ENCODE measurements at regions of chr6 and their contacts with region 1.

Region 1: GRCh38 chr6:95145457-95145856 is 431.9 kb upstream of the MANEA start:
- DNase-seq: no peak
- H3K4me3 ChIP-seq: no peak overlapping the region
- H3K27ac ChIP-seq: no peak overlapping the region
- H3K4me1 ChIP-seq: no peaks in the 10 kb centered on the region
- H3K27me3 ChIP-seq: no peaks in the 10 kb centered on the region
- CTCF ChIP-seq: no peak
- POLR2A ChIP-seq: no peak

Region 2: GRCh38 chr6:95230071-95230740 is 84.7 kb after region 1 on chr6:
- intact Hi-C with region 1: loop called (anchors 5 kb)
- DNase-seq: no peak
- H3K4me3 ChIP-seq: no peak overlapping the region
- H3K27ac ChIP-seq: no peak overlapping the region
- H3K4me1 ChIP-seq: no peaks in the 10 kb centered on the region
- H3K27me3 ChIP-seq: no peaks in the 10 kb centered on the region
- CTCF ChIP-seq: no peak
- POLR2A ChIP-seq: no peak

Region 3: DNA sequence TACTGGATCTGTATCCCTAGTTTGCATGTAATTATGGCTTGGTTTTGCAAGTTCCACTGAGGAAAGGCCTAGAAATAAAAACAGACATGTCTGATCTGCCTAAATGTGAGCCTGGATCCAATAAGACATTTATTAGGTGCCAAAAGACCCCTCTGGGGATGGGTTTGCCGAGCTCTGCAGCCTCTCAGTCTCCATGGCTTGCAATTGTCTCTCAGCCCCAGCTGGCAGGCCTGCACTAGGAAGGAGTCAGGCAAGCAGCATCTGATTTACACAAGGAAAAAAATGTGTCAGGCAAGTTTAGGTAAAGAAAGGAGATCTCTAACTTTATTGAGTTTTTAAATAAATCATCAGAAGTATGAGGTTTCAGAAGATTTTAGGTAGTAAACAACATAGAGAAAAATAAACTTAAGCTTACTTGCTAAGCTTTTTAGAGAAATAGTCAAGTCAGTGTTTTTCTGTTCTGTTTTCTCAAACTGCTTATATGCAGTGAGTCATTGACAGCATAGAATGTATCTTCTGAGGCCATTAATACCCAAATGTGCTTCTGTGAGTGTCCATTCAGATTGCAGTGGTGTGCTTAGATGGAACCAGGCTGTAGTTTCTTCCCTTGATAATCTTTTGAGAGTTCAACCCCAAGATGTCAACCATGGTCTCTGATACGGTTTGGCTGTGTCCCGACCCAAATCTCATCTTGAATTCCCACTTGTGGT is 1538.5 kb after region 1 on chr6:
- intact Hi-C with region 1: no loop called
- DNase-seq: no peak
- H3K4me3 ChIP-seq: no peak overlapping the region
- H3K27ac ChIP-seq: no peak overlapping the region
- H3K4me1 ChIP-seq: no peaks in the 10 kb centered on the region
- H3K27me3 ChIP-seq: no peaks in the 10 kb centered on the region
- CTCF ChIP-seq: no peak
- POLR2A ChIP-seq: no peak